GM13976 (cell line): ENCODE measurements at regions of chr3 and their contacts with region 1.

Region 1: DNA sequence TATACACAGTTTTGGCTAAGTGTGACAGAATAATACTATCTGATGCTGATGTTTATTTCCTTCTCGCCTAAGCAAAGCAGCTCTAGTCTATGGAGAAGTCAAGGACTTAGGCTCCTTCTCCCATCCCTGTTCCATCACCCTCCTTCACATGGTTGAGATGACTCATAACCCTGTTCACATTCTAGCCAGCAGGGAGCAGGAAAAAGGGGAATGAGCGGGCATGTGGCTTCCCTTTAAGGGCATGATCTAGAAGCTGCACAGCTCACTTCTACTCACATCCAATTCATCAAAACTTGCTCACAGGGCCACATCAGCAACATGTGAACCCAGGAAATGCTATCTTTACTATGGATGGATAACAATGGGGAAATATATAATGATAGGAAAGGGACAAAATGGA is 40.9 kb downstream of the CBLB start:
- DNase-seq: no peak
- CTCF ChIP-seq: no peak

Region 2: GRCh38 chr3:105647047-105647446 is 180.9 kb before region 1 on chr3:
- in situ Hi-C with region 1: no loop called
- DNase-seq: no peak
- CTCF ChIP-seq: no peak

Region 3: DNA sequence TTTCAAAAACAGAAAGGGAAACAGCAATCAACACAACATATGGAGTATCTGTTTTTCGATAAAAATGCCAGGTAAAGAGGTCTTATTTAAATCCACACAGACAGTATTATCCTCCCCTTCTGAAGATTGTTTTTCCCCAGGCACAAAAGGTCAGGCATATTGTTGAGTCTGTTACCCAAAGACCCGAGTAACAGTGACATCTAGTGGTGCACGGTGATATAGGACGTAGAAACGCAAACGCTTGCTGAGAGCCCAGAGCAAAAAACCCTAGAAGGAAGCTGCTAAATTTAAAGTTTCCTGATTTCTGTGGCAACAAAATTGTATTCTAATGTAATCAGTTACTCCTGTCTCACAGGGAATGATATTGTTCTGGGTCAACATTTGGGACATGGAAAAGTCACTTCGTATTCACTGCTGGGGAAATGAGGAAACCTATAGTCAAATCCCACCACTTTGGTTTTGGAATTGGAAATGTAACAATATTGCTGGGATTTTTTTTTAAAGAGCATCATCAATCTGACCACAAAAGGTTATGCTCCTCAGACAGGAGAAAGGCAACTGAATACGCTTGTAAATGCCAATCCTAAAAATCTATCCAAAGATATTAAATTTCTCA is 1236.6 kb after region 1 on chr3:
- in situ Hi-C with region 1: loop called (anchors 25 kb)
- DNase-seq: peak; percentile 37
- CTCF ChIP-seq: peak; percentile 73